Uterus (tissue), 4 donors: ENCODE measurements at regions of chr6 and their contacts with region 1.

Region 1: DNA sequence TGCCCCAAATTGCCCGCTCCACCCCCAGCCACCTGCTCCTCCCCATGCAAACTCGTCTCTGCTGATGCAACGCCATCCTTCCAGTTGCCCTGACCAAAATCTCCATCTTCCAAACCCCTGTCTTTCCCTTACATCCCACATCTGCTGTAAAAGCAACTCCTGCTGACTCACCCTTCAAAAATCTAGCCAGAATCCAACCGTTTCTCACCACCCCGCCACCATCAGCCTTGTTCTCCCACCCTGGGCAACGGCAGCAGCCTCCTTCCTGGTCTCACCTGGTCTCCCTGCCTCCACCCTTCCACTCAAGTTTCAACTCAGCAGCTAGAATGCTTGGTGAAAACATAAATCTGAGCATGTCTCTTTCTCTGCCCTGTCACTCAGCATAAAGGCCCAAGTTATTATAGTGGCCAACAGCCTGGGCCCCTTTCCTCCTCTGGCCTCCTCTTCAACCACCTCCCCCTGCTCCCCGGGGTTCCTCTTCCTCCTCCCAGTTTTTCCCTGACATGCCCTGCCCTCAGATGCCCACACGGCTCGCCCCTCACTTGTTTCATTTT is 7.2 kb upstream of the SYNJ2 start:
- DNase-seq: no peak
- H3K4me3 ChIP-seq: no peak overlapping the region
- H3K27ac ChIP-seq: no peak overlapping the region
- H3K4me1 ChIP-seq: no peaks in the 10 kb centered on the region
- H3K27me3 ChIP-seq: no peaks in the 10 kb centered on the region
- CTCF ChIP-seq: no peak
- POLR2A ChIP-seq: no peak

Region 2: GRCh38 chr6:157563611-157564284 is 410.7 kb before region 1 on chr6:
- intact Hi-C with region 1: no loop called
- DNase-seq: no peak
- H3K4me3 ChIP-seq: no peak overlapping the region
- H3K27ac ChIP-seq: no peak overlapping the region
- H3K4me1 ChIP-seq: no peaks in the 10 kb centered on the region
- H3K27me3 ChIP-seq: no peaks in the 10 kb centered on the region
- CTCF ChIP-seq: no peak
- POLR2A ChIP-seq: no peak

Region 3: DNA sequence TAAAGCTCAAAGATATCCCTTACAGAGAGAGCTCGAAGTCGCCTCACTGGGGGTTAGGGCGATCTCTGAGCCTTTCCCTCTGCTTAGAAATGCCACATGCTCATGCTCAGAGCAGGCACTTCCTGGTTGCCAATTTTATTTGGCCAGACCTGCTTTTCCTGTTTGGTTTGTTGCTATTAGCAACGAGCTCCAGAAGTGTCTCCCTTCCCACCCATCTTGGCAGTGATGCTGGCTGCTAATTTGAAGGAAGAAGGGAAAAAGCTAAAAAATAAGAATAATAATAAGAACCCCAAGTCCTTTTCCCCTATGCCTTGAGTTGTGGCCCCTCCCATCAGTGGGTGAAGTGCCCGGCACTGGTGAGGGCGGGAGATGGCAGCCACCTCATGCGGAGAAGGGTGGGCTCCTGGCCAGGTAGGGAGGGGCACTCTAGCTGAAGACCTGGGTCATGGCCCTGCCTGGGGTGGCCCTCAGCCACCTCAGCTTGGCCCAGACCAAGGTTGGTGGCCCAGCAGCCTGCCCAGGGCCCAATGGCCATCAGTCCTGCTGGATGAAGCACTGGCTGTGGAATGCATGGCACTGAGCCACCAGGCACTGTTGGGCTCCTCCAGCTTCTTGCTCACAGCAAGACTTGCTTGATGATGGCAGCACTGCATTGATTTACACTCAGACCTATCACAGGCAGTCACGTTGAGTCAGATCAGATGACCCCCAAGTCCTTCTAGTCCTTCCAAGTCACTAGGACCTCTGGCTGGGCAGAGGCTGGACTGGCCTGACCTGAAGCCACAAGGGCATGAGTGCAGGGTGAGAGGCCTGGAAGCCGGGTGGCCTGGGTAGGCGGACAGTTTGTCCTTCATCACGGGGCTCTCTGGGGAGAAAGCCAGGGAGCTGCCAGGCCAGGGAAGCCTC is 86.3 kb after region 1 on chr6:
- intact Hi-C with region 1: loop called (anchors 10 kb)
- DNase-seq: peak; percentile 77
- H3K4me3 ChIP-seq: no peak overlapping the region
- H3K27ac ChIP-seq: peak overlapping the region; percentile 66 to 72
- H3K4me1 ChIP-seq: peaks cover 13 to 14% of the 10 kb centered on the region in 2 donors
- H3K27me3 ChIP-seq: no peaks in the 10 kb centered on the region
- CTCF ChIP-seq: no peak
- POLR2A ChIP-seq: no peak